ENCODE measurements at regions of chr10 and their contacts with region 1.

Region 1: DNA sequence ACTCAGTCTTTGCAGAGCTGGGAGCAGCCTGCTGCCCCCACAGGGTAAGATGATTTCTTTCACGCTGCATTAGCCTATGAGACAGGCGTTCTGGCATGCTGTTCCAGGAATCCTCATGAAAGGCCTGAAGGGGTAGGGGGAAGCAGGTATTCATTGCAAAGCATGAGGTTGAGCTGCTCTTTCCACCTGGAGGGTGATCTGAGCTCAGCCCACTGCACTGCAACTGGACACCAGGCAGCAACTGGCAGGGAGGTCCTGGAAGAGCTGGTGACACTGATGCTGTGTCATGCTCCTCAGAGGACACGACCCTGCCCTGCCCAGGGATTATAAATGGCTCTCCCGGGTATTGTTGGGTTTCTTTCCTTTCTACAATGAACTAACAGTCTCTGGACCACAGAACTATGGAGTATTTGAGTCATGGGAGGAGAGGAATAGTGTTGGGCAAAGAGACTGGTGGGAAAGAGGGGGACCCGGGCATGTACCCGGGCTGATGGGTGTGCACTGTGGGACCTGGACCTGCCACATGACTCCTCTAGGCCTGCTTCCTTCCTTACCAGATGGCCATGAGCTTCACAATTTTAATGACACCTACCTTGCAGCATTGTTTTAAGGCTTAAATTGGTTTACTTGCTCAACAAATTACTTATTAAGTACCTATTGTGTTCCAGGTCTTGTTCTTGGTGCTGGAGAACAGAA is 24.3 kb downstream of the SLC25A28 start:
- DNase-seq: no peak
- H3K4me3 ChIP-seq: no peak overlapping the region
- H3K27ac ChIP-seq: no peak overlapping the region
- H3K4me1 ChIP-seq: no peaks in the 10 kb centered on the region
- H3K27me3 ChIP-seq: no peaks in the 10 kb centered on the region
- CTCF ChIP-seq: no peak
- POLR2A ChIP-seq: no peak

Region 2: GRCh38 chr10:99444383-99445045 is 151.4 kb before region 1 on chr10:
- intact Hi-C with region 1: loop called in 1 of 2 experiments (anchors 10 kb)
- DNase-seq: no peak
- H3K4me3 ChIP-seq: no peak overlapping the region
- H3K27ac ChIP-seq: no peak overlapping the region
- H3K4me1 ChIP-seq: no peaks in the 10 kb centered on the region
- H3K27me3 ChIP-seq: no peaks in the 10 kb centered on the region
- CTCF ChIP-seq: no peak
- POLR2A ChIP-seq: no peak